ENCODE measurements at regions of chr20 and their contacts with region 1.

Region 1: GRCh38 chr20:35303735-35304491 is 11.7 kb upstream of the FAM83C start:
- DNase-seq: no peak
- H3K4me3 ChIP-seq: no peak overlapping the region
- H3K27me3 ChIP-seq: no peaks in the 10 kb centered on the region
- CTCF ChIP-seq: peak; percentile 95

Region 2: GRCh38 chr20:35284267-35284991 is 19.5 kb before region 1 on chr20 and contains the start of gene EIF6:
- CTCF ChIA-PET with region 1: interaction called, 46 read pairs
- POLR2A ChIA-PET with region 1: interaction called, 3 read pairs
- DNase-seq: no peak
- H3K4me3 ChIP-seq: peak within 1 kb of the TSS; percentile 91
- H3K27me3 ChIP-seq: no peaks in the 10 kb centered on the region
- CTCF ChIP-seq: no peak
- polyA plus RNA-seq, gene EIF6: 182 and 261 TPM in 2 replicates

Region 3: GRCh38 chr20:35318502-35319157 is 14.7 kb after region 1 on chr20:
- CTCF ChIA-PET with region 1: interaction called, 85 read pairs
- POLR2A ChIA-PET with region 1: interaction called, 3 read pairs
- DNase-seq: no peak
- H3K4me3 ChIP-seq: no peak overlapping the region
- H3K27me3 ChIP-seq: no peaks in the 10 kb centered on the region
- CTCF ChIP-seq: no peak

Region 4: DNA sequence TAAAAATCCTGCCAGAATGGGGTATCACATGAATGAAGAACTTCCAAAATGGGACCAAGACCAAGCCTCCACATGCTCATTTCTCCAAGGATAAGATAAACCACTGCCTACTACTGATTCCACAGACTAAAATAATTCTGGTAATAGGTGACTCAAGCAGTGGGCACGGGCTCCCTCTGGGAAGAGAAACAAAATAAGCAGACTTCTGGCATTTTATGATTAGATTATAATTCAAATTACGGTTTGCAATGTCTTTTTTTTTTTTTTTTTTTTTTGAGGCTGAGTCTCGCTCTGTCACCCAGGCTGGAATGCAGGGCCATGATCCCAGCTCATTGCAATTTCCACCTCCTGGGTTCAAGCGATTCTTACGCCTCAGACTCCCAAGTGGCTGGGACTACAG is 91.8 kb after region 1 on chr20:
- CTCF ChIA-PET with region 1: interaction called, 11 read pairs
- POLR2A ChIA-PET with region 1: no interaction called
- DNase-seq: peak; percentile 42
- H3K4me3 ChIP-seq: no peak overlapping the region
- H3K27me3 ChIP-seq: no peaks in the 10 kb centered on the region
- CTCF ChIP-seq: peak; percentile 34

Region 5: DNA sequence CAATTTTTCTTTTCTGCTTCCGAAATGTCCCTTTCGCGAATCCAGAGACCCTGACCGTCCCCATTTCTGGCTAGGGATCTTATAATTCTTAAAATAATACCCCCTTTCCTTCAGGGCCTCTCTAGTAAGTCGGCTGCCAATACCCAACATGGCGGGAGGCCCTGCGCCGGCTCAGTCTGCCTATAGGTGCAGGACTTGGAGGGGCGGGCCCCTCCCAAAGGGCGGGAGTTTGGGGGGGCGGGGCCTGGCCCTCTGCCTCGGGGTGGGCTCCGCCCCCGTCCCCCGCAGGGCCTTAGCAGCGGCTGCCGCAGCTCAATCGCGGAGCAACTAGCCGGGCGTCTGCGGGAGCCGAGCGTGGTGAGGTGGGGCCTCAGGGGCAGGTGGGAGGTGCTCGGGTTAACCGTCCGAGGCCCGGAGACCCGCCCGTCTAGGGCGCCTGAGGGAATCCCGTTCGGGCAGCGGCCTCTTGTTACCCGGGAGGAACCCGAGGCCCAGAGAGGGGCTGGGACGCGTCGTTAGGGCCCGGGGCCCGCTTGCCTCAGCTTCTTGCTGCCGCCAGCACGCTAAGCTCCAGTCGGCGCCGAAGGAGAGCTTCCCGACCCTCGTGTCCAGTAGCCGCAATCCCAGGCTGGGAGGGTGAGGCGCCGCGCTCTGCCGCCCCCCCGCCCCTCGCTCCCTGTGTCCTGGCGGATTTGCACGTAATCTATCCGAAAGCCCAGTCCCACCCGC is 151.1 kb after region 1 on chr20 and contains the start of gene CEP250:
- CTCF ChIA-PET with region 1: interaction called, 392 read pairs
- POLR2A ChIA-PET with region 1: interaction called, 6 read pairs
- DNase-seq: peak; percentile 72
- H3K4me3 ChIP-seq: peak within 1 kb of the TSS; percentile 80
- H3K27me3 ChIP-seq: no peaks in the 10 kb centered on the region
- CTCF ChIP-seq: no peak
- polyA plus RNA-seq, gene CEP250: 6.6 and 7.9 TPM in 2 replicates